ENCODE measurements at regions of chr19 and their contacts with region 1.

Region 1: DNA sequence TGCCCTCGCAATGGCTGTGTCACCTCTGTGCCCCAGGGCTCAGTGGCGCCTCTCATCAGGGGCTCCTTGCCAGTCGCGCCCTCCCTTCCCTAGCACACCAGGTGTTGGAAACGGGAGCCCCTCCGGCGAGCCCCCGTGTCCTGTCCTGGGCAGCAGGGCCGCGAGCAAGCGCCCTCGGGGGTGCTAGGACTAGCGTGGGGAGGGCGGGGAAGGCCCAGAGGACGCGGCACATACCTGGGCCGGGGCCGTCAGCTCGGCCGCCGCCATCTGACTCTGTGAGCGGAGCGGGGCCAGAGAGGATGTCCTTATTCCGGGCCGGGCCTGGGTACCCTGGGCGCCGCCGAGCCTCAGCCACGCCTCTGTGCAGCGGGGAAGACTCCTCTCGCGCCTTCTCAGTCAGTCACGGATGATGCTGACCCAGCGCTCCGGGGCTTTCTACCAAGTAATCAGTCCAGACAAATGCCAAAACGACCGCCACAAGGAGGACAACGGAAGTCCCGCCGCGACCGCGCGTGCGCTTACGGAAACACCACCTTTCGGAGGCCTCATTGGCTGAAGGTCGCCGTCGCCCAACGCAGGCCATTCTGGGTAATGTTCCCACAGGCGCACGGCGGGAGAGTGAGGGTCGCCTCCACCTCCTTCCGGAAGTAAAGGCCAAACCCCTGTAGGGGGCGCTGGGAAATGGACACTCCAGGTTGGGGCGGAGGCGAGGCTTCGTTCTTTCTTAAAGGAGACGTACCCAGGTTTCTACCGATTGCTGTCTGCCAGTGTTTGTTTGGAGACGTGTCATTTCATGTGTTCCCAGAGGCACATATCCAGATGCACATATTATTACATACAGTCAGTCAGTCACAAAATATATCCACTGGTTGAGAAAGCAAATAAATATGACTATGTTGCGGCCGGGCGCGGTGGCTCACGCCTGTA is at the start of gene ZNF256:
- DNase-seq: peak; percentile 83
- ATAC-seq: peak; percentile 99
- H3K4me3 Mint-ChIP-seq: peak within 1 kb of the TSS; percentile 96
- H3K27ac Mint-ChIP-seq: peak within 1 kb of the TSS; percentile 89
- H3K4me1 Mint-ChIP-seq: peaks cover 30% of the 10 kb centered on the region
- H3K27me3 Mint-ChIP-seq: no peaks in the 10 kb centered on the region
- CTCF ChIP-seq: no peak
- total RNA-seq, gene ZNF256: 16.6 and 20.2 TPM in 2 replicates

Region 2: GRCh38 chr19:57583521-57584416 is 363.7 kb before region 1 on chr19 and contains the start of gene ZIK1:
- CTCF ChIA-PET with region 1: no interaction called
- POLR2A ChIA-PET with region 1: no interaction called
- intact Hi-C with region 1: loop called (anchors 5 kb)
- DNase-seq: peak; percentile 75
- ATAC-seq: peak; percentile 88
- H3K4me3 Mint-ChIP-seq: peak within 1 kb of the TSS; percentile 91
- H3K27ac Mint-ChIP-seq: peak within 1 kb of the TSS; percentile 87
- H3K4me1 Mint-ChIP-seq: peaks cover 27% of the 10 kb centered on the region
- H3K27me3 Mint-ChIP-seq: no peaks in the 10 kb centered on the region
- CTCF ChIP-seq: no peak
- total RNA-seq, gene ZIK1: 16.2 and 18.1 TPM in 2 replicates

Region 3: GRCh38 chr19:57888560-57889231 is 58.8 kb before region 1 on chr19 and contains the start of gene ZNF814:
- CTCF ChIA-PET with region 1: no interaction called
- POLR2A ChIA-PET with region 1: no interaction called
- intact Hi-C with region 1: loop called (anchors 5 kb)
- DNase-seq: peak; percentile 80
- ATAC-seq: peak; percentile 95
- H3K4me3 Mint-ChIP-seq: peak within 1 kb of the TSS; percentile 95
- H3K27ac Mint-ChIP-seq: peak within 1 kb of the TSS; percentile 84
- H3K4me1 Mint-ChIP-seq: peaks cover 37% of the 10 kb centered on the region
- H3K27me3 Mint-ChIP-seq: no peaks in the 10 kb centered on the region
- CTCF ChIP-seq: no peak
- total RNA-seq, gene ZNF814: 64.7 and 84.0 TPM in 2 replicates

Region 4: GRCh38 chr19:57934820-57935665 is 12.4 kb before region 1 on chr19 and contains the start of gene ZNF418:
- CTCF ChIA-PET with region 1: no interaction called
- POLR2A ChIA-PET with region 1: interaction called, 10 read pairs
- intact Hi-C with region 1: loop called (anchors 1 kb)
- DNase-seq: peak; percentile 40
- ATAC-seq: peak; percentile 99
- H3K4me3 Mint-ChIP-seq: peak within 1 kb of the TSS; percentile 96
- H3K27ac Mint-ChIP-seq: peak within 1 kb of the TSS; percentile 86
- H3K4me1 Mint-ChIP-seq: peaks cover 16% of the 10 kb centered on the region
- H3K27me3 Mint-ChIP-seq: no peaks in the 10 kb centered on the region
- CTCF ChIP-seq: no peak
- total RNA-seq, gene ZNF418: 21.3 and 26.5 TPM in 2 replicates

Region 5: GRCh38 chr19:58097781-58098681 is 150.6 kb after region 1 on chr19 and contains the start of gene ZSCAN18:
- CTCF ChIA-PET with region 1: no interaction called
- POLR2A ChIA-PET with region 1: no interaction called
- intact Hi-C with region 1: loop called (anchors 1 kb)
- DNase-seq: peak; percentile 98
- ATAC-seq: peak; percentile 93
- H3K4me3 Mint-ChIP-seq: peak within 1 kb of the TSS; percentile 90
- H3K27ac Mint-ChIP-seq: peak within 1 kb of the TSS; percentile 100
- H3K4me1 Mint-ChIP-seq: peaks cover 18% of the 10 kb centered on the region
- H3K27me3 Mint-ChIP-seq: no peaks in the 10 kb centered on the region
- CTCF ChIP-seq: no peak
- total RNA-seq, gene ZSCAN18: 40.8 and 49.8 TPM in 2 replicates